ENCODE measurements at regions of chr5 and their contacts with region 1.

Region 1: DNA sequence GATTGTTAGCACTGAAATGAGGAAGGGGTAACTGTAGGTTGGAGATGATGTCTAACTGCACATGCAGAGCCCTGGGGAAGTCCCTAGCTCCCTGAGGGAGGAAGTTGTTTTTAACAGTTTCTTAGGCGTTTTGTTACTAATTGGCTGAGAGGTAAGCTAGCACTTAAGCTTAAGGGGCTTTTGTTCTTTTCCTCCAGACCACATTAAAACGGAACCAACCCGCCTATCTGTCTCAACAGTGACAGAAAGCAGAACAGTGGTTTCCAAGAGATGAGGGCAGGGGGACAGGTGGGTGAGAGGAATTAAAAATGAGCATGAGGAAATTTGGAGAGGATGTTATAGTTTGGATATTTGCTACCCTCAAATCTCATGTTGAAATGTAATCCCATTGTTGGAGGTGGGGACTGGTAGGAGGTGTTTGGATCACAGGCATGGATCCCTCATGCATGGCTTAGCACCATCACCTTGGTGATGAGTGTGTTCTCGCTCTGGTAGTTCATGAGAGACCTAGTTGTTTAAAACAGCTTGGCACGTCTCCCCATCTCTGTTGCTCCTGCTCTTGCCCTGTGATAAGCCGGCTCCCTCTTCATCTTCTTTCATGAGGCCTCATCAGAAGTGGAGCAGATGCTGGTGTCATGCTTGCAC is 38.9 kb downstream of the LYRM7 start:
- H3K4me3 Mint-ChIP-seq: peak overlapping the region; percentile 68
- H3K27ac Mint-ChIP-seq: peak overlapping the region; percentile 91
- H3K4me1 Mint-ChIP-seq: peaks cover 48% of the 10 kb centered on the region
- H3K27me3 Mint-ChIP-seq: no peaks in the 10 kb centered on the region

Region 2: DNA sequence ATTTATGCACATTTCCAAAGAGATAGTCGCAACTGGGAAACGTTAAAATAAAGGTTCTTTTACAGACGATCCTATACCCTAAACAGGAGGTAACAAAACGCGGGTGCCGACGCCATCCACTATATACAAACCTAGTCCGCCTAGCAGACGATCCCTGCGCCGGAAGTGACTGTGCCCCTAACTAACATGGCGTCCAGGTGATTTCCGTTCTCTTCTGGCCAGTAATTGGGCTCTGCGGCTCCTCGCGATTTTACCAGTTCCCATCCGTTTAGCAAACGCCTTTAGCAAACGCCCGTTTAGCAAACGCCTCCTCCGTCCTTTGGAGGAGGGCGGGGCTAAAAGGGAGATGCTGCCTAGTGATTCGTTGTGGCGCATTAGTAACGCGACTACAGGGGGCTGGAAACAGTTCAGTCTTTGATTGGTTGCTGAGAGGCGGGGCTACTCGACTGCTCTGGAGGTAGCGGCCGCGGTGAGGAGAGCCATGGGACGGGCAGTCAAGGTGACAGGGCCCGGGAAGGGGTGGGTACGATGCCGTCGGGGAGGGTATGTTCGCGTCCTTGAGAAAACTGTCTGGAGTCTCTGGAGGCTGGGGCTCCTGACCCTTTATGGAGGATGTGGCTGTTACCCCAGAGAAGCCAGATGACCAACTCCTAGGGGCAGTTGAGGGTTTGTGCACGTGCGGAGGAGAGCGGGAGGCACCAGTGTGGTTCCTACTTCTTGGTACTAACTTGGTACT is 38.9 kb before region 1 on chr5 and contains the start of gene LYRM7:
- intact Hi-C with region 1: loop called (anchors 5 kb)
- H3K4me3 Mint-ChIP-seq: peak within 1 kb of the TSS; percentile 98
- H3K27ac Mint-ChIP-seq: peak within 1 kb of the TSS; percentile 94
- H3K4me1 Mint-ChIP-seq: peaks cover 24% of the 10 kb centered on the region
- H3K27me3 Mint-ChIP-seq: no peaks in the 10 kb centered on the region

Region 3: GRCh38 chr5:131224387-131225201 is 15.0 kb after region 1 on chr5:
- intact Hi-C with region 1: loop called (anchors 2 kb)
- H3K4me3 Mint-ChIP-seq: no peak overlapping the region
- H3K27ac Mint-ChIP-seq: no peak overlapping the region
- H3K4me1 Mint-ChIP-seq: peaks cover 16% of the 10 kb centered on the region
- H3K27me3 Mint-ChIP-seq: no peaks in the 10 kb centered on the region

Region 4: DNA sequence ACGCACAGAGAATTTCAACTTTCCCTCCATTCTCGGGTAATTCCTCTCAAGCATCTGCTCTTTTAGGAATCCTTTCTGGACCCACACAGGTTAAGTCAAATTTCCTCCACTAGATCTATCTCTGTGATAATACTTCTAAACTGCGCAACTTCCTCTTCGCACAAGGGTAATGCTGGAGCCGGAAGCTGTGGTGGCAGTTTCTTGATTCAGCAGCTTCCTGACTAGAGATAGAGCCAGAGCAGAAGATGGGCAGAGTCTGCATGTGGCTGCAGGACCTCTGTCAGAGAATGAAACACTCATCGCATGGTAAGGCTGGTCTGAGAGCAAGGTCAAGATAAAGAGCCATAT is 43.2 kb after region 1 on chr5:
- intact Hi-C with region 1: loop called (anchors 5 kb)
- H3K4me3 Mint-ChIP-seq: peak overlapping the region; percentile 73
- H3K27ac Mint-ChIP-seq: peak overlapping the region; percentile 93
- H3K4me1 Mint-ChIP-seq: peaks cover 59% of the 10 kb centered on the region
- H3K27me3 Mint-ChIP-seq: no peaks in the 10 kb centered on the region

Region 5: DNA sequence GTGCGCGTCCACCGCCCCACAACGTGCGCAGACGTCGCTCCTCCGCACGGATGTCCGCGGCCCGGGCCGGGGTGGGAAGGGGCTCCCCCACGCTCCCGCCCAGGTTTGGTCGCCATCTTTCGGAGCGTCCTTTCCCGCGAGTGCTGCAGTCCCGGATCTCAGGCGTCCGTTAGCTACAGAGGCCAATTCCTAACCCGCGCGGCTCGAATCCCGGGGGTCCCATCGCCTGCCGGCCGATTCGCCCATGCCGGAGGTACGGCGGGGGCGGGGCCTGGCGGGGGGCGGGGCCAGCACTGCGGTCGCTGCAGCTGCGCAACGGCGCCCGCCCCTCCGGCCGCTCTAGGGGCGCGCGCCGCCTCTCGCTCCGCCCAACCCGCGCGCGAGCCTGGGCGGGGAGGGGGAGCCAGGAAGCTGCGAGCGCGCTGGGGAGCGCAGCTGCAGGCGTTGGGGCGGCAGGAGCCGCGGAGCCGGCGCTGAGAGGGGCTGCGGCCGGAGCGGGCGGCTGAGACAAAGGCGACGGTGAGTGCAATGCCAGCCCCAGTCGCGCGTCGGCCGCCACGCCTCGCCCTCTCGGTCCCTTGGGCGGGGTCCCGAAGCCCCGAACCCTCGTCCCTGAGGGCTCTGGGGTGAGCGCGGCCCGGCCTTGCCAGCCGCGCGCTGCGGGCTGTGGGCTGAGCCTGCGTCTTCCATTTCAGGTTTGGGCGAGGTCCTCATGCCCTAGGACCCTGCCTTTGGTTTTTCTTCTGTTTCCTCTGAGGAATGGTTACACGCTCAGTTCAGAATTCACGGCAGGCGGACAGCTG is 54.2 kb after region 1 on chr5 and contains the start of gene CDC42SE2:
- intact Hi-C with region 1: loop called (anchors 2 kb)
- H3K4me3 Mint-ChIP-seq: peak within 1 kb of the TSS; percentile 80
- H3K27ac Mint-ChIP-seq: peak within 1 kb of the TSS; percentile 87
- H3K4me1 Mint-ChIP-seq: peaks cover 35% of the 10 kb centered on the region
- H3K27me3 Mint-ChIP-seq: no peaks in the 10 kb centered on the region